ENCODE measurements at regions of chr3 and their contacts with region 1.

Region 1: GRCh38 chr3:176005564-176005963 is 1146.4 kb downstream of the NAALADL2 start:
- DNase-seq: no peak
- ATAC-seq: no peak
- H3K4me3 ChIP-seq: no peak overlapping the region
- H3K27ac ChIP-seq: no peak overlapping the region
- H3K4me1 ChIP-seq: no peaks in the 10 kb centered on the region
- H3K27me3 ChIP-seq: no peaks in the 10 kb centered on the region
- CTCF ChIP-seq: no peak
- POLR2A ChIP-seq: no peak

Region 2: GRCh38 chr3:175716446-175716845 is 289.1 kb before region 1 on chr3:
- intact Hi-C with region 1: no loop called
- DNase-seq: no peak
- ATAC-seq: no peak
- H3K4me3 ChIP-seq: no peak overlapping the region
- H3K27ac ChIP-seq: no peak overlapping the region
- H3K4me1 ChIP-seq: no peaks in the 10 kb centered on the region
- H3K27me3 ChIP-seq: no peaks in the 10 kb centered on the region
- CTCF ChIP-seq: no peak
- POLR2A ChIP-seq: no peak

Region 3: GRCh38 chr3:175983379-175983778 is 22.2 kb before region 1 on chr3:
- intact Hi-C with region 1: loop called in 1 of 10 experiments (anchors 1 kb)
- DNase-seq: no peak
- ATAC-seq: no peak
- H3K4me3 ChIP-seq: no peak overlapping the region
- H3K27ac ChIP-seq: no peak overlapping the region
- H3K4me1 ChIP-seq: no peaks in the 10 kb centered on the region
- H3K27me3 ChIP-seq: no peaks in the 10 kb centered on the region
- CTCF ChIP-seq: no peak
- POLR2A ChIP-seq: no peak